Heart left ventricle (tissue), 16 donors: ENCODE measurements at regions of chr16 and their contacts with region 1.

Region 1: GRCh38 chr16:27242868-27243590 is 25.5 kb downstream of the NSMCE1 start:
- DNase-seq: peak in 4 of 5 donors; percentile 43 to 72 (median 62)
- ATAC-seq: peak; percentile 66 to 76 (median 72)
- H3K4me3 ChIP-seq: peak overlapping the region in 8 of 12 donors; percentile 17 to 33 (median 26)
- H3K27ac ChIP-seq: peak overlapping the region; percentile 7 to 82 (median 57)
- H3K4me1 ChIP-seq: peaks cover 0 to 75% (median 40%) of the 10 kb centered on the region in 12 donors
- H3K27me3 ChIP-seq: no peaks in the 10 kb centered on the region
- CTCF ChIP-seq: no peak
- POLR2A ChIP-seq: no peak

Region 2: DNA sequence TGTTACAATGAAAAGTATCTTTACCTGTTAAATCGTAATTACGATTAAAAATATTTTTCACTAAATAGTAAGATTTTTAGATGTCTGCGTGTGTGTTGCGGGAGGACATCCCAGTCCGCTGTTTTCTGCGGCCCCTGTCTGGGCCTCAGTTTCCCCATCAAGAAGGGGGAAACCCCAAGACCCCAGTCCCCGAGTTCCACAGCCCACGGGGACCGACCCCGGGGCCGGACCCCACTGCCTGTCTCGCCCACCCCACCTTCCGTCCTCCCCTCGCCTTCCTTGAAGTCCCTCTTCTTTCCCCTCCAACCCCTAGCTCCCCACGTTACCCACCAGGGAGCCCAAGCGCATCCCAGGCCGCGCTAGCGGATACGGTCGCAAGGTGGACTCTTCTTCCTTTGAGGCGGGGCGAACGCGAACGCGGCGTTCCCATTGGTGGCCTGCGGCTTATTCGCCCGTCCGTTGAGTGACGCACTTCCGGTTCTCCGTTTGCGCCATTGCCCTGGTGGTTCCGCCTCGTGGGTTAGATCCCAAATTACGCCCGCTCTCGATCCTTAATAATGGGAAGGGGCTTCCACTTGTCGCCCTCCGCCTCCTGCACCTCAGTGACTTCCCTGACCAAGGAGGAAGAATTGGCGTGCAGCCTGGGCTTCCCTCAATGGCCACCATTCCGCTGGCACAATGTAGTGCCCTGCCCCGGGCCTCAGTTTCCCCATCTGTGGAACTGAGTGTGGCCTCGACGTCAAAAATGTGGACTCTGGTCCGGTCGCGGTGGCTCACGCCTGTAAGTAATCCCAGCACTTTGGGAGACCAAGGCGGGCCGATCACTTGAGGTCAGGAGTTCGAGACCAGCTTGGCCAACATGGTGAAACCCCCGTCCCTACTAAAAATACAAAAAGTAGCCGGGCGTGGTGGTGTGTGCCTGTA is 25.6 kb after region 1 on chr16 and contains the start of gene NSMCE1:
- intact Hi-C with region 1: loop called in 1 of 10 experiments (anchors 2 kb)
- DNase-seq: peak; percentile 98 to 99 (median 99)
- ATAC-seq: peak; percentile 99 to 100 (median 100)
- H3K4me3 ChIP-seq: peak within 1 kb of the TSS; percentile 42 to 97 (median 88)
- H3K27ac ChIP-seq: peak within 1 kb of the TSS; percentile 52 to 90 (median 76)
- H3K4me1 ChIP-seq: peaks cover 0 to 42% (median 8%) of the 10 kb centered on the region in 12 donors
- H3K27me3 ChIP-seq: no peaks in the 10 kb centered on the region
- CTCF ChIP-seq: peak in 9 of 12 donors; percentile 1 to 44 (median 22)
- POLR2A ChIP-seq: peak in 1 of 2 donors; percentile 74
- total RNA-seq, gene NSMCE1: 29.6 to 48.7 (median 36.8) TPM

Region 3: DNA sequence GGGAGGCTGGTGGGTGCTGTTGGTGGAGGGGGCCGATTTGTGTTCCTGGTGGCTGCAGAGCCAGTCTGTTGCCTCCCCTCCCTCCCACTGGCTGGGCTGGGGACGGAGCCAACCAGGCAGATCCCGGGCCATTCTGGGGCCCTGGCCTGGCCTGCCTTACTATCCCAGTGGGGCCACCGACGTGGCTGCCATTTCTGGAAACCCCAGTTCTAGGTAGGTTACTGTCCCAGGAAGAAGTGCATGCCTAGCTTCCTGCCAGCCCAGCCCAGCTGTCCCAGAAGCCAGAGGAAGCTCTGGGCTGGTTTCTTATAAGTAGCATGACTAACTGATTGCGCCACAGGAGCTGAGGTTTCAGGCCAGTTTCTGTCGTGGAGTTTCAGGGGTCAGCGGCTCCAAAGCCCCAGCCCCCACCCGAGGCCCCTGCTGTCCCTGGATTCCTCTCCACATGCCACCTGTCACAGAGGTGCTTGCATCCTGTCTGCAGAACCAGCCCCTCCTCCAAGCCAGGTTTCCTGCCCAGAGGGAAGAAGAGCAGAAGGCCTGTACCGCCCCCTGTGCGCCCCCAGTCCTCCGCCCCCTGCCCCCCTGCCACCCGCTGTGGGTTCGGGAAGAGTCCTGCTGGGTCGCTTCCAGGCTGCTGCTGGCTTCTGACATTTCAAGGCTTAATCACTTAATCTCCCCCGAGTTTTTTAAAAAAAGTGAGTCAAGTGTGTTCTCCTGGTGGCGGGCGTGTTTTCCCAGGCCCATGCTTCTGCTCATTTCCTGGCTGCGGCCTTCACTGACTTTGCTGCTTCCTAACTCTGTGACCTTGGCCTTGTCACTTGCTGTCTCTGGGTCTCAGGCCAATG is 83.9 kb after region 1 on chr16:
- intact Hi-C with region 1: loop called in 1 of 10 experiments (anchors 2 kb)
- DNase-seq: peak; percentile 65 to 89 (median 76)
- ATAC-seq: peak; percentile 44 to 89 (median 82)
- H3K4me3 ChIP-seq: peak overlapping the region in 4 of 12 donors; percentile 2 to 31 (median 3)
- H3K27ac ChIP-seq: peak overlapping the region; percentile 62 to 98 (median 81)
- H3K4me1 ChIP-seq: peaks cover 0 to 92% (median 30%) of the 10 kb centered on the region in 12 donors
- H3K27me3 ChIP-seq: no peaks in the 10 kb centered on the region
- CTCF ChIP-seq: no peak
- POLR2A ChIP-seq: no peak

Region 4: DNA sequence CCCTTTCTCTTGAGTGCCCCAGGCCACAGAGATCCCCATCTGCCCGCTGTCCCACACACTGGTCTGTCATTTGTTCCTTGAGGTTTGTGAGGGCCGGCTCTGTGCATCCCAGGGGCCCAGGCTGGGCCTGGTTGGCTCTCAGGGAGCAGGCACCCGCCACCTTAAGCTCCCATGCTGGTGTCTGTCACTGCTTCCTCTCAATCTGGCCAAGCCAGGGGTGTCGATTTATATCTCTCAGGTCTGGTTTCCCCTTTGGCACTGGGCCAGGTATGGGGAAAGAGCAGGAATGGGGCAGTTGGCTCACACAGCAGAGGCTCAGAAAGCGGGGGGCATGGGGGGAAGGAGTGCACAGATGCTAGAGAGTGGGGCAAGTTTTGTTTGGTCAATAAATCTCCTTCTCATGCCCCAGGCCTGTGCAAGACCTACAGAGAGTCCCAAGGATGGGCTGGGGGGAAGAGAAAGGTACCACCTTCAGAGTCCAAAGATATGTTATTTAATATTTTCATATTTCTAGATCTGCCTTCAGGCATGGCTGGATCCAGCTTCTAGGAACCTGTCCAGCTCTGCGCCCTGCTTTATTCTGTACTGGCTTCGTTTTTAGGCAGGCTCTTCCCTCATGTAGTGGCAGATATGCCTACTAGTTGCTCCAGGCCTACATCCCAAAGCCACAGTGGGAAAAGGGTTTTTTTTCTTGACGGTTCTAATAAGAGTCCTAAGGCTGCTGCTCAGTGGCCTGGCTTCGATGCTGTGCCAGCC is 105.1 kb after region 1 on chr16:
- intact Hi-C with region 1: no loop called
- DNase-seq: no peak
- ATAC-seq: no peak
- H3K4me3 ChIP-seq: no peak overlapping the region
- H3K27ac ChIP-seq: peak overlapping the region in 1 of 12 donors; percentile 70
- H3K4me1 ChIP-seq: peaks cover 0 to 19% (median 0%) of the 10 kb centered on the region in 12 donors
- H3K27me3 ChIP-seq: no peaks in the 10 kb centered on the region
- CTCF ChIP-seq: no peak
- POLR2A ChIP-seq: no peak